ENCODE measurements at regions of chr9 and their contacts with region 1.

Region 1: DNA sequence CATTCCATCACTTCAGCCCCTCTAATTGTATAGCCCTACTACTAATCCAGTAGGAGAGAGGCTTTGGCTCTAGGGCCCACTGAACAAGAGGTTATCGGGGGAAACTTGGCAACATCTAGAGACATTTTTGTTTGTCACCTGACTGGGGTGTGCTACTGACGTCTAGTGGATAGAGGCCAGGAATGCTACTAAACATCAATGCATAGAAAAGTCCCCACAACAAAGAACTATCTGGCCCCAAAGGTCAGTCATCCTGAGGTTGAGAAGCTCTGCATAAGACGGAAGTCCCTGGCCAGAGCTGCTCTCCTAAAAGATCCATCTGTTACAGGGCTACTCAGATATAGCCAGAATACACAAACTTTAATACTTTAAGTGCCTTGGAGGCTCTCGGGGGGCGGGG is 570.6 kb upstream of the KLF4 start:
- DNase-seq: no peak
- ATAC-seq: no peak
- H3K4me3 ChIP-seq: no peak overlapping the region
- H3K4me3 Mint-ChIP-seq: no peak overlapping the region
- H3K27ac ChIP-seq: no peak overlapping the region
- H3K27ac Mint-ChIP-seq: no peak overlapping the region
- H3K4me1 ChIP-seq: no peaks in the 10 kb centered on the region
- H3K4me1 Mint-ChIP-seq: no peaks in the 10 kb centered on the region
- H3K27me3 ChIP-seq: no peaks in the 10 kb centered on the region
- H3K27me3 Mint-ChIP-seq: no peaks in the 10 kb centered on the region
- CTCF ChIP-seq: no peak

Region 2: GRCh38 chr9:107883496-107884124 is 176.6 kb before region 1 on chr9:
- intact Hi-C with region 1: no loop called
- DNase-seq: no peak
- ATAC-seq: no peak
- H3K4me3 ChIP-seq: no peak overlapping the region
- H3K4me3 Mint-ChIP-seq: no peak overlapping the region
- H3K27ac ChIP-seq: no peak overlapping the region
- H3K27ac Mint-ChIP-seq: no peak overlapping the region
- H3K4me1 ChIP-seq: no peaks in the 10 kb centered on the region
- H3K4me1 Mint-ChIP-seq: no peaks in the 10 kb centered on the region
- H3K27me3 ChIP-seq: no peaks in the 10 kb centered on the region
- H3K27me3 Mint-ChIP-seq: no peaks in the 10 kb centered on the region
- CTCF ChIP-seq: no peak

Region 3: GRCh38 chr9:107991581-107991980 is 68.6 kb before region 1 on chr9:
- intact Hi-C with region 1: loop called (anchors 2 kb)
- DNase-seq: no peak
- ATAC-seq: no peak
- H3K4me3 ChIP-seq: no peak overlapping the region
- H3K4me3 Mint-ChIP-seq: no peak overlapping the region
- H3K27ac ChIP-seq: no peak overlapping the region
- H3K27ac Mint-ChIP-seq: no peak overlapping the region
- H3K4me1 ChIP-seq: no peaks in the 10 kb centered on the region
- H3K4me1 Mint-ChIP-seq: no peaks in the 10 kb centered on the region
- H3K27me3 ChIP-seq: no peaks in the 10 kb centered on the region
- H3K27me3 Mint-ChIP-seq: no peaks in the 10 kb centered on the region
- CTCF ChIP-seq: no peak